IMR-90 (cell line): ENCODE measurements at regions of chr9 and their contacts with region 1.

Region 1: GRCh38 chr9:99221621-99222415 is at the starts of genes ALG2 and SEC61B:
- DNase-seq: peak; percentile 96
- ATAC-seq: peak; percentile 95
- H3K4me3 ChIP-seq: peak within 1 kb of the TSS; percentile 92
- H3K27ac ChIP-seq: peak within 1 kb of the TSS; percentile 98
- H3K4me1 ChIP-seq: no peaks in the 10 kb centered on the region; the same call in none of the 2 replicates
- H3K27me3 ChIP-seq: no peaks in the 10 kb centered on the region
- CTCF ChIP-seq: no peak
- POLR2A ChIP-seq: peak; percentile 96
- RAD21 ChIP-seq: no peak
- total RNA-seq, gene ALG2: 33.9 and 38.4 TPM in 2 replicates
- total RNA-seq, gene SEC61B: 180 and 184 TPM in 2 replicates

Region 2: GRCh38 chr9:98848450-98849149 is 373.2 kb before region 1 on chr9:
- CTCF ChIA-PET with region 1: no interaction called
- POLR2A ChIA-PET with region 1: no interaction called
- dilution Hi-C with region 1: no loop called
- in situ Hi-C with region 1: no loop called
- intact Hi-C with region 1: loop called (anchors 2 kb)
- DNase-seq: peak; percentile 98
- ATAC-seq: peak; percentile 99
- H3K4me3 ChIP-seq: peak overlapping the region; percentile 2; the same call in 1 of the 2 replicates
- H3K27ac ChIP-seq: peak overlapping the region; percentile 15; the same call in 1 of the 2 replicates
- H3K4me1 ChIP-seq: peaks cover 9% of the 10 kb centered on the region
- H3K27me3 ChIP-seq: peaks cover 6% of the 10 kb centered on the region; the same call in 1 of the 2 replicates
- CTCF ChIP-seq: peak; percentile 93
- POLR2A ChIP-seq: no peak
- RAD21 ChIP-seq: peak; percentile 94

Region 3: DNA sequence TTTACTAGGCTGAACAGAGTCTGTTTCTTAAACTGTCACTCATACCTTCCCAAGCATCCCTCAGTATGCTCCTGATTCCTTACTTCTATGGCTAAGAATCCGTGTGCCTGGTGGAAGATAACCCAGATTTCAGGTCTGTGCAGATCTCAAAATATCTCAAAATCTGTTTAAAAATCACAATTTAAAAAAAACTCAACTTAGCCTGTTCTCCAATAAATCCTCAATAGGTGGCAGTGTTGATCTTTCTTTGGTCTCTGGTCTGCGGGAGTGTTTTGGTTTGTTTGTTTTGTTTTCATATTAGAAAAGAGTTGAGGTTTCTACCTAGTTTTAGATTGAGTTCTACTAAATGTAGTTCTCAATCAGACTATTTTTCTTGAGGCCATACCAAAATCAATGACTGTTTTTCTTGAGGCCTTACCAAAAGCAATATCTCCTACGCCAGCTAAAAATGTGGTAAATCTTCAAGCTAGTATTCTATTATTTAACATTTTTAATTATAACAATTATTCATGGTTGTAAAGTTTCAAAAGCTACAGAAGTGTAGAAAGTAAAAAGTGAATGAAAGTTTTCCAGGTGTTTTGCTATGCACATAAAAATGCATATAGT is 59.0 kb before region 1 on chr9:
- CTCF ChIA-PET with region 1: no interaction called
- POLR2A ChIA-PET with region 1: no interaction called
- dilution Hi-C with region 1: no loop called
- in situ Hi-C with region 1: no loop called
- intact Hi-C with region 1: loop called (anchors 10 kb)
- DNase-seq: peak; percentile 51
- ATAC-seq: peak; percentile 67
- H3K4me3 ChIP-seq: no peak overlapping the region
- H3K27ac ChIP-seq: no peak overlapping the region
- H3K4me1 ChIP-seq: no peaks in the 10 kb centered on the region; the same call in 1 of the 2 replicates
- H3K27me3 ChIP-seq: peaks cover 7% of the 10 kb centered on the region
- CTCF ChIP-seq: peak; percentile 72
- POLR2A ChIP-seq: no peak
- RAD21 ChIP-seq: peak; percentile 78

Region 4: GRCh38 chr9:99211741-99212140 is 10.1 kb before region 1 on chr9:
- CTCF ChIA-PET with region 1: no interaction called
- POLR2A ChIA-PET with region 1: interaction called, 20 read pairs
- dilution Hi-C with region 1: no loop called
- in situ Hi-C with region 1: no loop called
- intact Hi-C with region 1: no loop called
- DNase-seq: no peak
- ATAC-seq: no peak
- H3K4me3 ChIP-seq: no peak overlapping the region
- H3K27ac ChIP-seq: no peak overlapping the region
- H3K4me1 ChIP-seq: no peaks in the 10 kb centered on the region
- H3K27me3 ChIP-seq: no peaks in the 10 kb centered on the region
- CTCF ChIP-seq: no peak
- POLR2A ChIP-seq: no peak
- RAD21 ChIP-seq: no peak